Activated CD4-positive, alpha-beta memory T cell treated with anti-CD3 and anti-CD28 coated beads, Interleukin-2, amount 10 ng/mL, durations not matched to agents 7 days and 5 days (primary cell): ENCODE measurements at regions of chr11 and their contacts with region 1.

Region 1: DNA sequence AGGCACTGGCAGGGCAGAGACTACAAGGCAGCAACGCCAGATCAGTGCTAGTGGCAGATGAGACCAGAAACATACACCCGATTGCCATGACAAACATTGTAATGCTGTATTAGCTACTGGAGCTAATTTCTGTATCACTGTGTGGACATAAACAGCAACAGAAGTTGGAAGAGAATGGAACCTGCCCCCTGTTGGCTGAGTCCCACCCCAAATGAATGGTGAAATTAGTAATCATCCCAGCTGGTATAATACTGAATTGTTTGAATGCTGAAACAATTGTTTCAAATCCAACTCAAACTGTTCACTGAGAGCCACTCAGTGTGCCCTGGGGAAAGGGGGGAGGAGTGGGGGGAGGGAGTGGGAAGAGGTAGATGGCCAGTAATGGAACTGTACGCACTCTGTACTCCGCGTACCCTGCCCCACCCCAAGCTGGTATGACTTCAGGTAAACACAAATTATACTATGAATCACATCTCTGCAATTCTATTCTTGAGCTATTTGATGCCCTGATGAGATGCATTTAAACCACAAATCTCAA is 11.2 kb upstream of the BIRC3 start:
- DNase-seq: no peak
- H3K4me3 Mint-ChIP-seq: peak overlapping the region; percentile 5
- H3K27ac Mint-ChIP-seq: peak overlapping the region; percentile 66
- H3K4me1 Mint-ChIP-seq: peaks cover 57% of the 10 kb centered on the region
- H3K27me3 Mint-ChIP-seq: no peaks in the 10 kb centered on the region

Region 2: GRCh38 chr11:102317099-102317767 is 11.1 kb after region 1 on chr11 and contains the start of gene BIRC3:
- CTCF ChIA-PET with region 1: interaction called, 8 read pairs
- POLR2A ChIA-PET with region 1: interaction called, 45 read pairs
- DNase-seq: peak; percentile 92
- H3K4me3 Mint-ChIP-seq: peak within 1 kb of the TSS; percentile 94
- H3K27ac Mint-ChIP-seq: peak within 1 kb of the TSS; percentile 91
- H3K4me1 Mint-ChIP-seq: peaks cover 69% of the 10 kb centered on the region
- H3K27me3 Mint-ChIP-seq: no peaks in the 10 kb centered on the region
- total RNA-seq, gene BIRC3: 79.0 to 80.0 TPM